ENCODE measurements at regions of chr14 and their contacts with region 1.

Region 1: GRCh38 chr14:106622200-106622745 is 1095.9 kb downstream of the TMEM121 start:
- DNase-seq: no peak
- ATAC-seq: no peak
- H3K4me3 ChIP-seq: no peak overlapping the region
- H3K4me3 Mint-ChIP-seq: no peak overlapping the region
- H3K27ac ChIP-seq: no peak overlapping the region
- H3K27ac Mint-ChIP-seq: no peak overlapping the region
- H3K4me1 ChIP-seq: peaks cover under 1 to 5% of the 10 kb centered on the region in 2 donors
- H3K4me1 Mint-ChIP-seq: peaks cover 7% of the 10 kb centered on the region
- H3K27me3 ChIP-seq: peaks cover 0 to 11% (median 3%) of the 10 kb centered on the region in 4 experiments
- H3K27me3 Mint-ChIP-seq: peaks cover 46% of the 10 kb centered on the region
- CTCF ChIP-seq: no peak

Region 2: GRCh38 chr14:106605548-106606448 is 16.5 kb before region 1 on chr14:
- CTCF ChIA-PET with region 1: interaction called, 14 read pairs
- POLR2A ChIA-PET with region 1: no interaction called
- intact Hi-C with region 1: no loop called
- DNase-seq: peak; percentile 90
- ATAC-seq: peak; percentile 99
- H3K4me3 ChIP-seq: no peak overlapping the region
- H3K4me3 Mint-ChIP-seq: no peak overlapping the region
- H3K27ac ChIP-seq: no peak overlapping the region
- H3K27ac Mint-ChIP-seq: no peak overlapping the region
- H3K4me1 ChIP-seq: peaks cover 0 to 9% of the 10 kb centered on the region in 2 donors
- H3K4me1 Mint-ChIP-seq: peaks cover 14% of the 10 kb centered on the region
- H3K27me3 ChIP-seq: peaks cover 0 to 13% (median 8%) of the 10 kb centered on the region in 4 experiments
- H3K27me3 Mint-ChIP-seq: peaks cover 65% of the 10 kb centered on the region
- CTCF ChIP-seq: peak; percentile 76

Region 3: DNA sequence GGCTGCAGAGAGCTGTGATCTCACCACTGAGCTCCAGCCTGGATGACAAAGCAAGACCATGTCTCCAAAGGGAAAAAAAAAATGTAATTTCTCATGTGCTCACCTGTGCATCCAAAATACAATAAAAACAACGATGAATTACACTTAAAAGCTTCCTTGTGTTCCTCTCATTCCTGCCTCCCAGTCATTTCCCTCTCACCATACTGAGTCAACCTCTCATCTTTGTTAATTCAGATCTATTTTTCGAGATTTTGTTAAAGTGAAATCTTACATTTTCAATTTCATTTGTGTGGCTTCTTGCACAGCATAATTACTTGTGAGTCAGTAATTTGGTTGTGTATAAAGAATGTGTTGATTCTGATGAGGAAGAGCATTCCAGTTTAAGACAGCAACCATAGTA is 107.3 kb after region 1 on chr14:
- CTCF ChIA-PET with region 1: no interaction called
- POLR2A ChIA-PET with region 1: no interaction called
- intact Hi-C with region 1: no loop called
- DNase-seq: no peak
- ATAC-seq: no peak
- H3K4me3 ChIP-seq: no peak overlapping the region
- H3K4me3 Mint-ChIP-seq: no peak overlapping the region
- H3K27ac ChIP-seq: no peak overlapping the region
- H3K27ac Mint-ChIP-seq: no peak overlapping the region
- H3K4me1 ChIP-seq: peaks cover 3 to 8% of the 10 kb centered on the region in 2 donors
- H3K4me1 Mint-ChIP-seq: no peaks in the 10 kb centered on the region
- H3K27me3 ChIP-seq: no peaks in the 10 kb centered on the region
- H3K27me3 Mint-ChIP-seq: no peaks in the 10 kb centered on the region
- CTCF ChIP-seq: no peak